Gastrocnemius medialis (tissue), 4 donors: ENCODE measurements at regions of chr11 and their contacts with region 1.

Region 1: DNA sequence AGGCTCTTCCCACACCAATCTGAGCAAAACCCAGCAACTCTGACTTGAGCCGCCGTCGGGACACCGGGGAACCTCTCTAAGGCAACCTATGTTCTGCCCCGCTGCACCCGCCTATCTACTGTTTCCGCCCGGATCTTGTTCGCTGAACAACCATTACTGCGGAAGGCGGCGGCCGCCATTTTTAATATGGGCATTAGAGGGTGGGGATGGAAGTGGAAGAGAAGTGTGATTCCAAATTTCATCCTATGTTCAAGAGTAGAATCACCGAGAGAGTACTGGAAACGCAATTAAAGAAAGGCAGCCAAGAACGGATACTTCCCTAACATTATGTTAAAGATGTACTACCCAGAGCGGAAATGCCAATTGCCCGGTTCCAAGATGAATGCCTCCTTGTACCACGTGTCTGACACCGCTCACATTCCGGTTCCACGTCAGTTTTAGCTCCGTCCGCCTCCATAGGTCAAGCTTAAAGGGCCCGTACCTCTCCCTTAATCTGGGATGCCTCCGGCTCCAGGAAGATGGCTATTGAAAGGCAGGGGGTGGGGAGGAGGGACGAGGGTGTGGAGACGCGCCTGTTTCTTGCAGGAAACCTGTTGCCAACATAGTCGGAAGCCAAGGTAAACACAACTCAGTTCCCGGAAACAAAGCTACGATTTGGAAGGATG is at the start of gene DPAGT1:
- DNase-seq: peak; percentile 90 to 91
- ATAC-seq: peak; percentile 97 to 98
- H3K4me3 ChIP-seq: peak within 1 kb of the TSS; percentile 74 to 90 (median 79)
- H3K27ac ChIP-seq: peak within 1 kb of the TSS; percentile 88 to 93 (median 90)
- H3K4me1 ChIP-seq: peaks cover 24 to 31% of the 10 kb centered on the region in 2 donors
- H3K27me3 ChIP-seq: no peaks in the 10 kb centered on the region
- CTCF ChIP-seq: peak in 1 of 5 experiments; percentile 29
- POLR2A ChIP-seq: peak; percentile 19 to 43
- total RNA-seq, gene DPAGT1: 8.9 to 34.0 (median 15.1) TPM

Region 2: GRCh38 chr11:119084663-119085436 is 17.0 kb before region 1 on chr11 and contains the start of gene HMBS:
- in situ Hi-C with region 1: no loop called
- intact Hi-C with region 1: loop called (anchors 1 kb)
- DNase-seq: peak; percentile 87 to 92
- ATAC-seq: peak; percentile 98
- H3K4me3 ChIP-seq: peak within 1 kb of the TSS; percentile 77 to 99 (median 80)
- H3K27ac ChIP-seq: peak within 1 kb of the TSS; percentile 88 to 98 (median 94)
- H3K4me1 ChIP-seq: peaks cover 15 to 17% of the 10 kb centered on the region in 2 donors
- H3K27me3 ChIP-seq: no peaks in the 10 kb centered on the region
- CTCF ChIP-seq: no peak
- POLR2A ChIP-seq: peak; percentile 20 to 49
- total RNA-seq, gene HMBS: 8.7 to 31.1 (median 14.5) TPM

Region 3: DNA sequence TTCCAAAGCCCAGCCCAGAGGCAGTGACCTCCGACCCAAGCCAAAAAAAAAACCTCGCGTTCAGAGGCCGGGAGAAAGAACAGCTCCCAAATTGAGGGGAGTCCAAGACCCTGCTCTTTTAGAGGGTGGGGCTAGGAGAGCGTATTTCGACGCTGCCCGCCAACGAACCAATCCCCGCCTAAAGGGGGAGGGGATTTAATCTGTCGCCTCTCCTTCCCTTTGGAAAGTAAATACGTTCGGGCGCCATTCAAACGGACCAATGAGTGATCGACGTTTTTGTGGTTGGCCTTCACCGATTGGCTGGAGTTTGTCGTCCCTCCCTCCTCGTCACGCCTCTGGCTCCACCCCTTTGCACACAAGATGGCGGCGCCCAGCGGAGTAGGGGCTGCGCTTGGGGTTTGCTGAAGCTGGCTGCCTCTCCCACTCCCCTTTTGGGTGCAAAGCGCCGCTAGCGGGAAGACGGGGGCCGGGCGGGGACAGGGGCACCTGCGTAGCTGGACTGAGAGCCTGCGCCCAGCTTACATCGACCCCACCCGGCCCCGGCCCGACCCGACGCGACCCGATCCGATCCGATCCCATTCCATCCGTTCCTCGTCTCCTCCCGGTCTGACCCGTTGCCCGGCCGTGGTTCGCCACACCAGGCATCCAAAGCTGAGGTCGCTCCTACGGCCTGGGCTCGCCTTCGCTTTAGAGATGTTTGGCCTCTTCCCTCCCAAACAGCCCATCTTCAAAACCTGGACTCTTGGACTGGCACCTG is 232.5 kb after region 1 on chr11 and contains the start of gene RNF26:
- in situ Hi-C with region 1: no loop called
- intact Hi-C with region 1: loop called (anchors 5 kb)
- DNase-seq: peak; percentile 98
- ATAC-seq: peak; percentile 97 to 98
- H3K4me3 ChIP-seq: peak within 1 kb of the TSS; percentile 80 to 99 (median 93)
- H3K27ac ChIP-seq: peak within 1 kb of the TSS; percentile 91 to 98 (median 96)
- H3K4me1 ChIP-seq: peaks cover 32 to 38% of the 10 kb centered on the region in 2 donors
- H3K27me3 ChIP-seq: no peaks in the 10 kb centered on the region
- CTCF ChIP-seq: no peak
- POLR2A ChIP-seq: peak; percentile 85 to 86
- total RNA-seq, gene RNF26: 3.8 to 5.1 (median 4.7) TPM